CD8-positive, alpha-beta memory T cell (primary cell): ENCODE measurements at regions of chr19 and their contacts with region 1.

Region 1: GRCh38 chr19:35066691-35067563 is 25.4 kb downstream of the HPN start:
- DNase-seq: peak; percentile 77 to 91 (median 83)
- H3K4me3 ChIP-seq: no peak overlapping the region
- H3K4me3 Mint-ChIP-seq: peak overlapping the region in 2 of 7 donors; percentile 19
- H3K27ac ChIP-seq: no peak overlapping the region
- H3K27ac Mint-ChIP-seq: peak overlapping the region in 5 of 8 donors; percentile 36 to 68 (median 64)
- H3K4me1 ChIP-seq: peaks cover 8% of the 10 kb centered on the region
- H3K4me1 Mint-ChIP-seq: peaks cover 4 to 8% (median 7%) of the 10 kb centered on the region in 3 donors
- H3K27me3 ChIP-seq: no peaks in the 10 kb centered on the region
- H3K27me3 Mint-ChIP-seq: no peaks in the 10 kb centered on the region

Region 2: GRCh38 chr19:35037716-35038622 is 29.0 kb before region 1 on chr19:
- CTCF ChIA-PET with region 1: no interaction called
- POLR2A ChIA-PET with region 1: no interaction called
- DNase-seq: no peak
- H3K4me3 ChIP-seq: no peak overlapping the region
- H3K4me3 Mint-ChIP-seq: peak overlapping the region in 1 of 7 donors; percentile 45
- H3K27ac ChIP-seq: no peak overlapping the region
- H3K27ac Mint-ChIP-seq: peak overlapping the region in 3 of 8 donors; percentile 71 to 77 (median 73)
- H3K4me1 ChIP-seq: peaks cover 23% of the 10 kb centered on the region
- H3K4me1 Mint-ChIP-seq: peaks cover 12 to 23% (median 13%) of the 10 kb centered on the region in 3 donors
- H3K27me3 ChIP-seq: no peaks in the 10 kb centered on the region
- H3K27me3 Mint-ChIP-seq: peaks cover 0 to 2% of the 10 kb centered on the region in 2 donors

Region 3: DNA sequence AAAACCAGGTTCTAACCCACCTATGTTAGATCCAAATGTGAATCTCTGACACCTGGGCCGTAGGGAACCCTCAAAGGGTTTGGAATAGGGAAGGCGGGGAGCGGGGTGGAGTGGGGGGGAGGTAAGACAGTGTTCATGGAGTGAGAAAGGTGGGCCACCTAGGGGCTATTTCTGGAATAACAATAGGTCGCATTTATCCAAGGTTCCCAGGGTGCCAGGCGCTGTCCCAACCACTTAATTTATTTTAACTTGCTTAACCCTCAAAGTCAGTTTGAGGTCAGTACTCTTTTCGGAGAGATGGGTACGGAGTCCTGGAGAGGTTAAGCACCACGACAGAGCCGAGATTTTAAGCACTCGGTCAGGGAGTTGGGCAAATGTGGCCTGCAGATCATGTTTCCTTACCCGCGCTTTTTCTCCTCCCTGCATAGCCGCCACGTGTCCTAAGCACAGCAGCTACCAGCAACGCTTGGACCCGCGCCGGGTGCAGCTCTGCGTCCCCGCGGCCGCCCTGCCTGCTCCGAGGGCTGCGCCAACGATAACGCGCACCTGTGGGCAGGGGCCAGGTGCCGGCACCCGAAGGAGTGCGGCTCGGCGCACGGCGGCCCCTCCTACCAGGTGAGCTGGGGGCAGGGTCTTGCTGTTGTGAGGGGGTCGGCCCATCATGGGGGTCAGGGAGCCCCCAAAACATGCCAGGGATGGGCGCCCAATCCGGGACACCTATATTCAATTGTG is 23.7 kb after region 1 on chr19:
- CTCF ChIA-PET with region 1: interaction called, 13 read pairs
- POLR2A ChIA-PET with region 1: no interaction called
- DNase-seq: peak in 3 of 5 donors; percentile 19 to 40 (median 26)
- H3K4me3 ChIP-seq: no peak overlapping the region
- H3K4me3 Mint-ChIP-seq: no peak overlapping the region
- H3K27ac ChIP-seq: no peak overlapping the region
- H3K27ac Mint-ChIP-seq: peak overlapping the region in 2 of 8 donors; percentile 27 to 45
- H3K4me1 ChIP-seq: peaks cover 18% of the 10 kb centered on the region
- H3K4me1 Mint-ChIP-seq: peaks cover 14 to 19% (median 18%) of the 10 kb centered on the region in 3 donors
- H3K27me3 ChIP-seq: no peaks in the 10 kb centered on the region
- H3K27me3 Mint-ChIP-seq: peaks cover 7 to 12% of the 10 kb centered on the region in 2 donors